ENCODE measurements at regions of chr7 and their contacts with region 1.

Region 1: GRCh38 chr7:98831641-98832221 is 38.1 kb downstream of the TMEM130 start:
- DNase-seq: peak in 1 of 2 experiments; percentile 41
- ATAC-seq: no peak
- H3K4me3 ChIP-seq: no peak overlapping the region
- H3K27ac ChIP-seq: no peak overlapping the region
- H3K4me1 ChIP-seq: no peaks in the 10 kb centered on the region
- CTCF ChIP-seq: peak; percentile 47; the same call in 2 of the 3 replicates
- EP300 ChIP-seq: no peak
- POLR2A ChIP-seq: no peak
- RAD21 ChIP-seq: 0 out of 5 replicates have a peak, but pooled peaks of 1 of the 2 experiments have one; percentile 25

Region 2: GRCh38 chr7:98434095-98434494 is 397.6 kb before region 1 on chr7:
- CTCF ChIA-PET with region 1: interaction called, 288 read pairs
- POLR2A ChIA-PET with region 1: no interaction called
- DNase-seq: no peak
- ATAC-seq: no peak; a peak in 2 of 6 replicates
- H3K4me3 ChIP-seq: no peak overlapping the region
- H3K27ac ChIP-seq: no peak overlapping the region
- H3K4me1 ChIP-seq: no peaks in the 10 kb centered on the region
- CTCF ChIP-seq: no peak
- EP300 ChIP-seq: no peak
- POLR2A ChIP-seq: no peak
- RAD21 ChIP-seq: no peak

Region 3: DNA sequence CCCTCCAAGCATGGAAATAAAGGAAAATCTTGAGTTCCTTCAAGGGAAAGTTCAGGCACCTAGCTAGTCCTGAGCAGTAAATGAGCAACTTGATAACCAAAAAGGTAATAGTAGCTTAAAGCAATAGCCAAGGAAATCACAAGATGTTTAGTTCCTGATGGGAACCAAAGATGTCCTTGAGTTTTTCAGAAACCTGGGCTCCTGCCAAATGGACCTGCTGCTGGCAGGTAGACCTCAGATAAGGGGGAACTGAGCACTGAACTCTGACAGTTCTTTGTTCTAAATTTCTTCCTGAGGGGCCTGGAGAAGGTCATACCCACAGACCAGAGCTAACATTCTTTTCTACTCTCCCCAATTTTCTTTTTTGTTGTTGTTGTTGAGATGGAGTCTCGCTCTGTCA is 10.4 kb before region 1 on chr7:
- CTCF ChIA-PET with region 1: interaction called, 160 read pairs
- POLR2A ChIA-PET with region 1: no interaction called
- DNase-seq: no peak
- ATAC-seq: no peak
- H3K4me3 ChIP-seq: no peak overlapping the region
- H3K27ac ChIP-seq: peak overlapping the region in 1 of 2 experiments; percentile 81; a peak in 4 of 6 replicates
- H3K4me1 ChIP-seq: peaks cover 15% of the 10 kb centered on the region
- CTCF ChIP-seq: no peak
- EP300 ChIP-seq: no peak
- POLR2A ChIP-seq: no peak
- RAD21 ChIP-seq: no peak

Region 4: DNA sequence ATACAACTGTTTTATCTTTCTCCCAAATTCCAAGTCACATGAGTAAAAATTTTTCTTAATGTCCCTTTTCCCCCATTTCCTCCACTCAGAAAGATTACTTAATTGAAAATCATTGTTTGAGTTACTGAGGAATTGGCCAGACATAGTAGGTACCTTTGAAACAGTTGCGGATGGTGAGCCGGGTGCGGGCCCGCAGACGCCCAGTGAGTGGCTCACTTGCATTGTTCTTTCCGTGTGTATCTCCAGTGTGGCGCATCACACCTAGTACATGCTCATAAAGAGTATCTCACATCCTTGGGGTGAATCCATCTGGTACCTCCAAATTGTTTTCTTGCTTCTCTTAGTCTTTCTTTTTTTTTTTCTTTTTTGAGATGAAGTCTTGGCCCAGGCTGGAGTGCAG is 60.9 kb after region 1 on chr7:
- CTCF ChIA-PET with region 1: no interaction called
- POLR2A ChIA-PET with region 1: no interaction called
- DNase-seq: no peak
- ATAC-seq: no peak
- H3K4me3 ChIP-seq: no peak overlapping the region
- H3K27ac ChIP-seq: no peak overlapping the region
- H3K4me1 ChIP-seq: no peaks in the 10 kb centered on the region
- CTCF ChIP-seq: no peak
- EP300 ChIP-seq: no peak
- POLR2A ChIP-seq: no peak
- RAD21 ChIP-seq: no peak